Ascending aorta (tissue), 2 donors: ENCODE measurements at regions of chrX and their contacts with region 1.

Region 1: DNA sequence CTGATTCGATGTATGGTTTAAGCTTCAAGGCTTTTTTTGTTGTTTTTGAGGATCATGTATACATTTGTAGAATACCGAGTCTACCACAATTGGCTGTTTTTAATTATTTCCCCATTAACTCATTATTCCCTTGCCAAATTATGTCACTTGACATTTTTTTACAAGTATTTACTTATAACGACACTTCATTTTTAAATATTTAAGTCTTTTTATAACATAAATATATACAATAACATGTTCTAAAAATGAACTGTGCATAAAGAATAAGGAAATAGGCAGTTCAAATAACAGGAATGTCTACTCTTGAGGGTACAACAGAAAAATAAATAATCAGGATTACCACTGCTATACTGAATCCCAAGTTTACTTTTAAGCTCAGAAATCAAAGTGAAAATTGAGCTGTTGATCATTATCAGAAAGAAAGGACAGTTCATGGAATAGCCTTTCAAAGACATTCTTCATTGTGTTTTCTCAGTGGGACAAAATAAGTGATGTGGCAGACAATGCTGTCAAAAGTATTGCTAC is 627.5 kb downstream of the PCDH19 start:
- DNase-seq: no peak
- H3K4me3 ChIP-seq: no peak overlapping the region
- H3K27ac ChIP-seq: no peak overlapping the region
- H3K4me1 ChIP-seq: no peaks in the 10 kb centered on the region
- H3K27me3 ChIP-seq: no peaks in the 10 kb centered on the region
- CTCF ChIP-seq: no peak

Region 2: DNA sequence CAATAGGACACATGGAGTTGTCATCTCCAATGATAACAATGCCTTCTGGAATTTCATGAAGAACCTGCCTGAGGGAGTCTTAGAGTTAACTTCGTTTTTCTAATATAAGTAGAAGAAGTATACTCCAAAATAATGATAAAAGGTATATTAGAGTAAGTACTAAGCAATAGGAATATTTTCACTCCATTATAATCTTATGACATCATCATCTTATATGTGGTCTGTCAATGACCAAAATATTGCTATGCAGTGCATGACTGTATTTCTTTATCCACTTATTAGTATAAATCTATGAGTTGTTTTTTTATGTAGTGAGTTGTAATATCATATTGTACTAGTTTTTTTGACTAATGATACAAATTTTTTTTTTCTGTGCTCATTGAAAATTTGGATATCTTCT is 218.3 kb before region 1 on chrX:
- intact Hi-C with region 1: no loop called
- DNase-seq: no peak
- H3K4me3 ChIP-seq: no peak overlapping the region
- H3K27ac ChIP-seq: no peak overlapping the region
- H3K4me1 ChIP-seq: no peaks in the 10 kb centered on the region
- H3K27me3 ChIP-seq: no peaks in the 10 kb centered on the region
- CTCF ChIP-seq: no peak

Region 3: DNA sequence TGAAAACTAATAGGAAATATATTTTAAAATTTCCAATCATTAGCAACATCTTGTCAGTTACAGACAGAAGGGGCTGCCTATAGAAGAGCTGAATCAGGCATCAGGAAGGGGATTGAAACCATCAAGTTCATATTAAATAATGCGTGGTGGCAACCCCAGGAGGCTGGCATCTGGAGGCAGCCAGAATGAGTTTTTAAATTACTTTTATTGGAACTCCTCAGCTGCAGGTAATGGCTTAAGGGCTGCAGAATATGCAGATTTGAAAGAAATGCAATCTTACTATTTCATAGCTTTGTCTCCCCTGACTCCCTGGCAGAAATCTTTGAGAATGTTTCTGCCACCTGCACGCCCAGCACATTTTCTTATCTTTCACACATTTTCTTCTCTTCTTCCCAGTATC is 84.1 kb before region 1 on chrX:
- intact Hi-C with region 1: no loop called
- DNase-seq: no peak
- H3K4me3 ChIP-seq: no peak overlapping the region
- H3K27ac ChIP-seq: no peak overlapping the region
- H3K4me1 ChIP-seq: no peaks in the 10 kb centered on the region
- H3K27me3 ChIP-seq: no peaks in the 10 kb centered on the region
- CTCF ChIP-seq: no peak

Region 4: GRCh38 chrX:99798936-99799335 is 16.4 kb after region 1 on chrX:
- intact Hi-C with region 1: loop called (anchors 1 kb)
- DNase-seq: no peak
- H3K4me3 ChIP-seq: no peak overlapping the region
- H3K27ac ChIP-seq: no peak overlapping the region
- H3K4me1 ChIP-seq: no peaks in the 10 kb centered on the region
- H3K27me3 ChIP-seq: no peaks in the 10 kb centered on the region
- CTCF ChIP-seq: no peak